ENCODE measurements at regions of chr5 and their contacts with region 1.

Region 1: DNA sequence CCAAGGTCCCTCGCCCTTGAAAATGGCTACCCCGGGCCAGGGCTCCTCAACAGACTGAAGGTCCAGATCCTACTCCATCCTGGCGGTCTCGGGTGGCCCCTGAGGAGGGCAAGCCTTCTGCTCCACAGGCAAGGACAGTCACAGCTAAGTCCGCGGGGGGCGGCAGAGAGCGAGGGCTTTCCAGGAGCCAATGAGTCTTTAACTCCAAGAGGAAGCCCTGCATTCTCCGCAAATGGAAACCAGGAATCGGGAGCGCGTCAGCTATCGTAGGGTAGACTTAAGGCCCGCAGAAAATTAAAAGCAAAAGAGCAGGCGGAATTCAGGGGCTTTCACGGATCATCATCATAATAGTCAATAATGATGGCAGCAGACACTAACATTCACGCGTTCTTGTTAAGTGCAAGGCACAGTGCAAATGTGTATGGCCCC is 87.8 kb upstream of the TNFAIP8 start:
- DNase-seq: peak; percentile 84 to 94
- ATAC-seq: peak; percentile 81 to 89 (median 81)
- H3K4me3 ChIP-seq: peak overlapping the region; percentile 98
- H3K4me3 Mint-ChIP-seq: peak overlapping the region; percentile 97
- H3K27ac ChIP-seq: peak overlapping the region; percentile 90
- H3K27ac Mint-ChIP-seq: peak overlapping the region; percentile 89 to 98
- H3K4me1 ChIP-seq: peaks cover 31% of the 10 kb centered on the region
- H3K4me1 Mint-ChIP-seq: peaks cover 50 to 62% of the 10 kb centered on the region in 2 donors
- H3K27me3 ChIP-seq: no peaks in the 10 kb centered on the region
- H3K27me3 Mint-ChIP-seq: no peaks in the 10 kb centered on the region
- CTCF ChIP-seq: peak; percentile 88

Region 2: GRCh38 chr5:118857700-118858099 is 410.3 kb before region 1 on chr5:
- intact Hi-C with region 1: no loop called
- DNase-seq: no peak
- ATAC-seq: peak in 1 of 3 donors; percentile 71
- H3K4me3 ChIP-seq: no peak overlapping the region
- H3K4me3 Mint-ChIP-seq: no peak overlapping the region
- H3K27ac ChIP-seq: no peak overlapping the region
- H3K27ac Mint-ChIP-seq: no peak overlapping the region
- H3K4me1 ChIP-seq: no peaks in the 10 kb centered on the region
- H3K4me1 Mint-ChIP-seq: no peaks in the 10 kb centered on the region
- H3K27me3 ChIP-seq: no peaks in the 10 kb centered on the region
- H3K27me3 Mint-ChIP-seq: no peaks in the 10 kb centered on the region
- CTCF ChIP-seq: no peak

Region 3: DNA sequence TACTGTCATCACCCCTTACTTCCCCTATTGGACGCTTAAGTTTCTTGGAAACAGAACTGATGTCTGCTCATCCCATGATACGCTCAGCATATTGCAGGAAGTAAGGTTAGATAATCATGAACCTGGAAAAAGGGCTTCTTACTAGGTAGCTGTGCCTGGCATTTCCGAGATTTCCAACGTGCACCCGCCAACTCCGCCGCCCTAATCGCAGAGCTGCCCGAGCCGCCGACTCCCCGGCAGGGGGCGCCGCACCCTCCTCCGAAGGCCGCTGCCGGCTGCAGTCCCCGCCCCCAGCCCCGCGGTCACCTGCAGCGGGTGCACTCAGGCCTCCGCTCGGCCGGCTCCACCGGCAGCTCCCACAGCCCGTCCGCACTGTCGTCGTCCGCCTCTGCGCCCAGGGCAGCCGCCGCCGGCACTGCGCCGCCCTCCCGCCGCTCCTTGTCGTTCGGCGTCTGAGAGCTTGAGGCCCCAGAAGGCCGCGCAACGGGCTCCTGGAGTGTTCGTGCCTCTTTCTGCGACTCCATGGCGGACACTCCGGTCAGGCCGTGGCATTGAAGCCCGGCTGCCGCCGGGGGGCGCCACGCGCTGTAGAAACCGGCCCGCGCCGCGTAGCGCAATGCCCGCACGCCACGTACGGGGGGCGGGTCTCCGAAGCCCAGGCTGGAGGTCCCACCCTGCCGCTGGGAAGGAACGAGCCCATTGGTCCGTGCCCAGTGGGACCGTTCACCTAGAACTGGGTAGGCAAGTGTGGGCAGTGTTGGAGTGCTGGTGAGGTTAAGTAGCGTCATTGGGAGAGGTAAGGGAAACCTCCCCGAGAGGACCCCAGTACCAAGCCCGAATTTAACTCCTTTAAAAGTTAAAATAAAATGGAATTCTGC is 279.7 kb before region 1 on chr5 and contains the start of gene DTWD2:
- intact Hi-C with region 1: loop called (anchors 1 kb)
- DNase-seq: peak; percentile 92 to 96
- ATAC-seq: peak; percentile 90 to 97 (median 91)
- H3K4me3 ChIP-seq: peak within 1 kb of the TSS; percentile 43
- H3K4me3 Mint-ChIP-seq: peak within 1 kb of the TSS; percentile 82
- H3K27ac ChIP-seq: peak within 1 kb of the TSS; percentile 70
- H3K27ac Mint-ChIP-seq: peak within 1 kb of the TSS; percentile 48 to 82
- H3K4me1 ChIP-seq: peaks cover 5% of the 10 kb centered on the region
- H3K4me1 Mint-ChIP-seq: peaks cover 11 to 16% of the 10 kb centered on the region in 2 donors
- H3K27me3 ChIP-seq: no peaks in the 10 kb centered on the region
- H3K27me3 Mint-ChIP-seq: no peaks in the 10 kb centered on the region
- CTCF ChIP-seq: peak; percentile 99
- total RNA-seq, gene DTWD2: 3.7 to 6.0 (median 4.1) TPM

Region 4: GRCh38 chr5:119070828-119071572 is 197.0 kb before region 1 on chr5 and contains the start of gene DMXL1:
- intact Hi-C with region 1: loop called (anchors 1 kb)
- DNase-seq: peak; percentile 96 to 99
- ATAC-seq: peak; percentile 87 to 96 (median 89)
- H3K4me3 ChIP-seq: peak within 1 kb of the TSS; percentile 79
- H3K4me3 Mint-ChIP-seq: peak within 1 kb of the TSS; percentile 100
- H3K27ac ChIP-seq: peak within 1 kb of the TSS; percentile 93
- H3K27ac Mint-ChIP-seq: peak within 1 kb of the TSS; percentile 98 to 100
- H3K4me1 ChIP-seq: peaks cover 19% of the 10 kb centered on the region
- H3K4me1 Mint-ChIP-seq: peaks cover 39 to 41% of the 10 kb centered on the region in 2 donors
- H3K27me3 ChIP-seq: no peaks in the 10 kb centered on the region
- H3K27me3 Mint-ChIP-seq: no peaks in the 10 kb centered on the region
- CTCF ChIP-seq: no peak
- total RNA-seq, gene DMXL1: 36.7 to 43.0 (median 39.9) TPM

Region 5: GRCh38 chr5:119309326-119309725 is 41.4 kb after region 1 on chr5:
- intact Hi-C with region 1: loop called (anchors 2 kb)
- DNase-seq: peak in 1 of 2 donors; percentile 51
- ATAC-seq: peak; percentile 9 to 16 (median 15)
- H3K4me3 ChIP-seq: no peak overlapping the region
- H3K4me3 Mint-ChIP-seq: peak overlapping the region; percentile 91
- H3K27ac ChIP-seq: peak overlapping the region; percentile 61
- H3K27ac Mint-ChIP-seq: peak overlapping the region; percentile 93 to 98
- H3K4me1 ChIP-seq: peaks cover 56% of the 10 kb centered on the region
- H3K4me1 Mint-ChIP-seq: peaks cover 76% of the 10 kb centered on the region in 2 donors
- H3K27me3 ChIP-seq: no peaks in the 10 kb centered on the region
- H3K27me3 Mint-ChIP-seq: no peaks in the 10 kb centered on the region
- CTCF ChIP-seq: no peak

Region 6: DNA sequence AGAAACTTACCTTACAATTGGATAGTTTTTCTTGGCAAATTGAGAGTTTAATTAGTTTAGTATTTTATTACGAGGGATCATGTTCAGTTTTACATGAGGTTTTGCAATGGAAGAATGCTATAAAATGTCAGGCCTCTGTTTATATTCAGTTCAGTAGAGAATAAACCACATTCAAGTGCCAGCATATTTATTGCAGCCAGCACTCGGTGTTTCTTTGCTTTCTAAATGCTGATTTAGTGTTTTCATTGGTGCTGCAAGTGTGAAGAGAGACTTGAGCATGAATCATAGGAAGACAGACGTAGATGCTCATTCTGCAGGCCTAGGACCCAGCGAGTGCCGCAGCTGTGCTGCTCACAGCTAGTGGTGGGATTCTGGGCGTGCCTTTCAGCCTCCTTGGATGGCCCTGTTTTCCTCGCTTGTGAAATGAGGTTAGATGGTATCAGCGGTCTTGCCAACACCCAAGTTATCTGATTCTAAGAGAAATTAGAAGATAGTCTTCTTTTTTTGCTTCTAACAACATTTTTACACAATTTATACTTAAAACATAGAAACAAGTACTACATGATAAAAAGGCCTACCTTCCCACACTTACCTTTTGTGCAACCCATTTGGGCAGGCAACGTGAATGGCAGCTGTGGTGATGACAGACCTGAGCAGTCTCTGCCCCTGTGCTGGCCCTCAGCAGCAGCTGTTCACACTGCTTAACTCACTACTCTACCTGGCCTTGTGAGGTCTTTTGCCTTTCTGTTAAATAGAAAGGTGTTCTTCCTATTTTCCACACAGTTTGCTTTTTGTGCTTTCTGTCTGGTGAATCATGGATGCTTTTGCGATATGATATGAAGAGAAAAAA is 61.0 kb after region 1 on chr5:
- intact Hi-C with region 1: loop called (anchors 2 kb)
- DNase-seq: peak; percentile 48 to 82
- ATAC-seq: peak; percentile 74 to 76 (median 75)
- H3K4me3 ChIP-seq: no peak overlapping the region
- H3K4me3 Mint-ChIP-seq: peak overlapping the region; percentile 70
- H3K27ac ChIP-seq: peak overlapping the region; percentile 62
- H3K27ac Mint-ChIP-seq: peak overlapping the region; percentile 86 to 88
- H3K4me1 ChIP-seq: peaks cover 71% of the 10 kb centered on the region
- H3K4me1 Mint-ChIP-seq: peaks cover 80 to 87% of the 10 kb centered on the region in 2 donors
- H3K27me3 ChIP-seq: no peaks in the 10 kb centered on the region
- H3K27me3 Mint-ChIP-seq: no peaks in the 10 kb centered on the region
- CTCF ChIP-seq: no peak

Region 7: DNA sequence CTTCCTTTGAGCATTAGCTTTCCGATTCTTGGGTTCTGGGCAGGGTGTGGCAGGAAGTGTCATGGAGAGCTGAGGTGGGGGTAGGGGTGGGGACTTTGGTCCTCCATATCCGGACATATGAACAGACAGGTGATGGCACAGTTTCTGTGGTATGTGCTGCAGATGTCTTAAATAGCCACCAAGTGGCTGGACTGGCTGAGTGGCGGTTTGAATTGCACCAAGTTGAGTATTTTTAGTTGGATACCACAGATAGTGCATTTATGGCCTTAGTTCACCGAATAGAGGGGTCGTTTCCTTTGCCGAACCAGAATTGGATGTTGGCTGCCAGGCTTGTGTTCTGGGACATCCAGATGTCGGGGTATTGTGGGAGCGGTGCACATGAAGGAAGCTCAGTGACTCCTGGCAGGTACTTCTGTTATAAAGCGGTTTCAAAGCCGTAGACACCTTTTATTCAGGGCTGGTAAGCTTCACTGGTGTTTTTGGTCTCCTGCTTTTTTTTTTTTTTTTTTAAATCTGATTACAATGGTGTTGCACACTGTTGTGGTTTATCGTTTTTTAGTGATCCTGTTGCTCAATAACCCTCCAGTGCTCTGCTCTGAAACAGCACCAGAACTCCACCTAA is 72.7 kb after region 1 on chr5:
- intact Hi-C with region 1: loop called (anchors 2 kb)
- DNase-seq: peak in 1 of 2 donors; percentile 78
- ATAC-seq: peak; percentile 32 to 54 (median 46)
- H3K4me3 ChIP-seq: peak overlapping the region; percentile 2
- H3K4me3 Mint-ChIP-seq: peak overlapping the region; percentile 93
- H3K27ac ChIP-seq: peak overlapping the region; percentile 70
- H3K27ac Mint-ChIP-seq: peak overlapping the region; percentile 86 to 88
- H3K4me1 ChIP-seq: peaks cover 73% of the 10 kb centered on the region
- H3K4me1 Mint-ChIP-seq: peaks cover 93 to 96% of the 10 kb centered on the region in 2 donors
- H3K27me3 ChIP-seq: no peaks in the 10 kb centered on the region
- H3K27me3 Mint-ChIP-seq: no peaks in the 10 kb centered on the region
- CTCF ChIP-seq: no peak

Region 8: GRCh38 chr5:119411935-119412602 is 144.1 kb after region 1 on chr5:
- intact Hi-C with region 1: loop called (anchors 2 kb)
- DNase-seq: peak; percentile 21 to 88
- ATAC-seq: peak; percentile 84 to 98 (median 96)
- H3K4me3 ChIP-seq: peak overlapping the region; percentile 38
- H3K4me3 Mint-ChIP-seq: peak overlapping the region; percentile 94
- H3K27ac ChIP-seq: no peak overlapping the region
- H3K27ac Mint-ChIP-seq: peak overlapping the region in 1 of 2 donors; percentile 85
- H3K4me1 ChIP-seq: peaks cover 8% of the 10 kb centered on the region
- H3K4me1 Mint-ChIP-seq: peaks cover 9 to 10% of the 10 kb centered on the region in 2 donors
- H3K27me3 ChIP-seq: no peaks in the 10 kb centered on the region
- H3K27me3 Mint-ChIP-seq: peaks cover 0 to 4% of the 10 kb centered on the region in 2 donors
- CTCF ChIP-seq: peak; percentile 94

Region 9: DNA sequence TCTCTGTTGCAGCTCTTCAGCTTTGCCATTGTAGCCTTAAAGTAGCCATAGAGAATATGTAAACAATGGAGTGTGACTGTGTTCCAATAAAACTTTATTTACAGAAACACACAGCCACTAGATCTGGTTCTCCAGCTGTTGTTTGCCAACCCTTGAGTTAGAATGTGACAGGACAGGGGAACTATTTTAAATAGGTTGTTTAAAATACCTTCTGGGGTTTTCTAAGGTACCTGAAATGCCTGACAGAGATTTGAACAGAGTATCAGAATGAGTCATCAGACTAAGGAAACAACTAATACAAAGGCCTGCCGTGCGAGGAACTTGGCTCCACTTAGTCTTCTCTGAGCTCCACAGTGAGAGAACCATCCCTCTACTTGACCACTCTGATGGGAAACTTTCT is 269.7 kb after region 1 on chr5:
- intact Hi-C with region 1: no loop called
- DNase-seq: no peak
- ATAC-seq: no peak
- H3K4me3 ChIP-seq: no peak overlapping the region
- H3K4me3 Mint-ChIP-seq: no peak overlapping the region
- H3K27ac ChIP-seq: no peak overlapping the region
- H3K27ac Mint-ChIP-seq: no peak overlapping the region
- H3K4me1 ChIP-seq: no peaks in the 10 kb centered on the region
- H3K4me1 Mint-ChIP-seq: no peaks in the 10 kb centered on the region
- H3K27me3 ChIP-seq: no peaks in the 10 kb centered on the region
- H3K27me3 Mint-ChIP-seq: no peaks in the 10 kb centered on the region
- CTCF ChIP-seq: no peak